ENCODE measurements at regions of chr1 and their contacts with region 1.

Region 1: DNA sequence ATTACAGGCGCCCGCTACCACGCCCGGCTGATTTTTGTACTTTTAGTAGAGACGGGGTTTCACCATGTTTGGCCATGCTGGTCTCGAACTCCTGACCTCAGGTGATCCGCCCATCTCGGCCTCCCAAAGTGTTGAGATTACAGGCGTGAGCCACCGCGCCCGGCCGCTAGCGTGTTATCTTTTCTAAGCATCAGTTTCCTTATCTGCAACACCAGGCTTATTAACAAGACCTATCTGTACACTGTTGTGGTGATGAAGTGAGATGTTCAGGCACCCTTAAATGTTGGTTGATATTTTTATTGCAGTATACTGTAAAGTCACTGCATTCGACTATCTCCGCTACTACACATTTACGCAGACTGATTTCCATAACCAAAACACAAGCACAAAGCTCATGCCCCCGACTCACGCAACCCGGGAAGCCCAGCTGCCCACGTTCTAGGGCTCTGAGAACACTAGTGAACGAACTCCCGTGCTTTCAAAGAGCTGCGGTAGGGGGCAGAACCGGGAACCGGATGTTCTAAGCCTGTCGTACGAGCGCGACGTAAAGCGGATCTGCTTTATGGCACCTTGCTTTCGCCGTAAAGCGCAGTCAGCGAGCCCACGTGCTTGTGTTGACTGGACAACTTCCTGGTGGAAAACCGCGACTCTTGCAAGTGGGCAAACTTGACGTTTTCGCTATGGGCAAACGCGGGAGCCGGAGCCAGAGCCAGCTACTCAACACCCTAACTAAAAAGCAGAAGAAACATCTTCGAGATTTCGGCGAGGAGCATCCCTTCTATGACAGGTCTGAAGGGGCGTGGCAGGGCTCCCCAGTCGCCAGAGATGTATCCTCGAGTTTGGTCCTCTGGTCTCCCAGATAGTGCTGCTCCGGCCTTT is at the start of gene UTP25:
- DNase-seq: peak; percentile 91 to 94 (median 93)
- H3K4me3 ChIP-seq: peak within 1 kb of the TSS; percentile 90 to 94
- H3K4me3 Mint-ChIP-seq: peak within 1 kb of the TSS; percentile 88 to 98 (median 96)
- H3K27ac ChIP-seq: peak within 1 kb of the TSS; percentile 73
- H3K27ac Mint-ChIP-seq: peak within 1 kb of the TSS; percentile 90 to 97 (median 92)
- H3K4me1 ChIP-seq: peaks cover 18% of the 10 kb centered on the region
- H3K4me1 Mint-ChIP-seq: peaks cover 24 to 46% (median 32%) of the 10 kb centered on the region in 4 donors
- H3K27me3 ChIP-seq: no peaks in the 10 kb centered on the region
- H3K27me3 Mint-ChIP-seq: peaks cover 5% of the 10 kb centered on the region in 2 donors
- total RNA-seq, gene UTP25: 13.4 to 13.6 TPM

Region 2: DNA sequence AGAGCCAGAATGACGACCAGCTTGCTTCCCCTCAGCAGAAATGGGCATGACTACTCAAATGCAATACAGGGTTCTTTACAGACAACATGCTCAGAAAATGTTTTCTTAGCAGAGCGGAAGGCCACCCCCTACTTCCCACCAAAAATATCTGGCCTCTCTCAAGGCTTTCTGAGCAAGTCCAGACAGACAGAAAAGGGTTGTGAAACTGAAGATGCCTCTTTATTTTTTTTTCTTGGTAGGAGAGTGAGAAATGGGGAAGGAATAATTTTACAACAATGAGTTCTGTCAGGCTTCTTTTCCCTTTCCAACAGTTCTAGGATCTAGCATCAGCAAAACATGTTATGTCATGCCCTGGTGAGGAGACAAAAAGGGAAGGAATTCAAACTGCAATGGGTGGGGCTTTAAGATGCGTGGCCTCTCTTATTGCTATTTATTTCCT is 416.1 kb before region 1 on chr1:
- CTCF ChIA-PET with region 1: no interaction called
- POLR2A ChIA-PET with region 1: no interaction called
- intact Hi-C with region 1: no loop called
- DNase-seq: no peak
- H3K4me3 ChIP-seq: no peak overlapping the region
- H3K4me3 Mint-ChIP-seq: peak overlapping the region in 1 of 8 donors; percentile 10
- H3K27ac ChIP-seq: no peak overlapping the region
- H3K27ac Mint-ChIP-seq: no peak overlapping the region
- H3K4me1 ChIP-seq: no peaks in the 10 kb centered on the region
- H3K4me1 Mint-ChIP-seq: no peaks in the 10 kb centered on the region
- H3K27me3 ChIP-seq: no peaks in the 10 kb centered on the region
- H3K27me3 Mint-ChIP-seq: peaks cover 16 to 24% of the 10 kb centered on the region in 2 donors

Region 3: GRCh38 chr1:209565759-209566678 is 261.6 kb before region 1 on chr1:
- CTCF ChIA-PET with region 1: interaction called, 4 read pairs
- POLR2A ChIA-PET with region 1: no interaction called
- intact Hi-C with region 1: loop called (anchors 5 kb)
- DNase-seq: peak; percentile 64 to 78 (median 67)
- H3K4me3 ChIP-seq: no peak overlapping the region
- H3K4me3 Mint-ChIP-seq: no peak overlapping the region
- H3K27ac ChIP-seq: no peak overlapping the region
- H3K27ac Mint-ChIP-seq: peak overlapping the region in 1 of 7 donors; percentile 45
- H3K4me1 ChIP-seq: peaks cover 6% of the 10 kb centered on the region
- H3K4me1 Mint-ChIP-seq: peaks cover 6 to 7% (median 6%) of the 10 kb centered on the region in 4 donors
- H3K27me3 ChIP-seq: peaks cover 9% of the 10 kb centered on the region
- H3K27me3 Mint-ChIP-seq: peaks cover 17 to 40% of the 10 kb centered on the region in 2 donors

Region 4: DNA sequence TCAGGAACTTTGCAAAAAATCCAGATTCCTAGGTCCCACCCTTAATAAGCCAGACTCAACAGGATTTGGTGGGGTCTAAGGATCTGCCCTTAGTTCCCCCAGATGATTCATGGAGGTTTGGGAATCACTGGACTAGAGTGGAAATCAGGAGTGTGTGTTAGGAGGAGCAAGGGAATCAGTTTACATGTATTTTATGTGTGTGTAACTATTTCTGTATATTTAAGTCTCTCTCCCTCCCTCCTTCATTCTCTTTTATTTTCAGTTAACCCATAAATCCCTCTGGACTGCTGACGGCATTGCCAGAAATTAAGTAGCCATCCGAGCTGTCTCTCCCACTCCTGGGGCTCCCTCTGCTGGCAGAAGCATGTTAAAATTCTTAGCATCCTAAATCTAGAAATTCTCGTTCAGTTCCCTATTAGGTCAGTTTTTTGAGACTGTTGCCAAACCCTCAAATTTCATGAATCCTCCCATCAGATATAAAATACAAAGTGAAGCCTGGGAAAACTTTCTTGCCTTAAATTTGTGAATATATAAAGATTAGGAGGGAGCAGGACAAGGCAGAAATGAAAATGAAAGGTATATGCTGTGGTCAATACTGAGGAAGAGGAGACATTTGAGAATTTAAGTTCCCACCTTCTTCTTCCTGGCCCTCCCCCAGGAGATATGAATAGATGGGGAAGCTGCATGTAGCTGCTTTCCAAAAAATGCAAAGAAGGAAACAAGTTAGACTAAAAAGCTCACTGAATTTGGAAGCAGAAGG is 134.7 kb before region 1 on chr1:
- CTCF ChIA-PET with region 1: interaction called, 9 read pairs
- POLR2A ChIA-PET with region 1: interaction called, 3 read pairs
- intact Hi-C with region 1: loop called (anchors 5 kb)
- DNase-seq: peak; percentile 60 to 68 (median 62)
- H3K4me3 ChIP-seq: no peak overlapping the region
- H3K4me3 Mint-ChIP-seq: peak overlapping the region in 1 of 8 donors; percentile 9
- H3K27ac ChIP-seq: no peak overlapping the region
- H3K27ac Mint-ChIP-seq: peak overlapping the region in 3 of 7 donors; percentile 43 to 66 (median 57)
- H3K4me1 ChIP-seq: peaks cover 15% of the 10 kb centered on the region
- H3K4me1 Mint-ChIP-seq: peaks cover 18 to 25% (median 22%) of the 10 kb centered on the region in 4 donors
- H3K27me3 ChIP-seq: no peaks in the 10 kb centered on the region
- H3K27me3 Mint-ChIP-seq: peaks cover 0 to 2% of the 10 kb centered on the region in 2 donors

Region 5: DNA sequence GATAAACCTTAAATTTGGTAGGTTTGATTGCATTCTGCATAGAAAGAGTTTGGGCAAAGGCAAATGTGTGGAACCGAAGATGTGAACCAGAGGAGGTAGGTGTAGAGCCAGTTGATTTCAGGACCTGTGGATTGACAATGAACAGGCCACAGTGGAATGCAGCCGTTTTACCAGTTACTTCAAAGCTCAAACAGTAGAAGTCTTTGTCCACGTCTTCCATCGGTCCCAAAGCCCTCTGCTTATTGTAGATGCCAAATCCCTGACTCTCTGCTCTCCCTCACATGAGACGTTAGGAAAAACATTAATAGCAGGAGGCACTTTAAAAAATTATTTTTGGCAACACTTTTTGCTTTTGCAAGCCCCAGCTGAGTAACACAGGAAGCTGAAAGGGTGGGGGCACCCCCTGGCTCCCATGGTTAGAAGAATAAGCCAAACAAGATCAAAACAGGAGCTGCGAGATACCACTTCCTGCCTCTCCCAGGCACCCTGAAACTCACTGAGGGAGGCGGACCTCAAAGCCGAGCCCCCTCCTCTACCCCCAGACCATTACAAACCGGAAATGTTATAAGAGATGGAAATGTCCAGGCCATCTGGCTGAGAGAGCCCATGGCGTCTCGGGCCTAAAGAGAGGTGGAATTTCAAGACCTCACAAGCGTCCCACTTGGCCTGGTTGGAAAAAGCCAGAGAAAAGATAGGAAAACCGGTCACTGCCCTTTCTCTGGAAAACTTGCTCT is 58.3 kb before region 1 on chr1:
- CTCF ChIA-PET with region 1: interaction called, 17 read pairs
- POLR2A ChIA-PET with region 1: interaction called, 15 read pairs
- intact Hi-C with region 1: loop called (anchors 1 kb)
- DNase-seq: peak; percentile 74 to 88 (median 78)
- H3K4me3 ChIP-seq: peak overlapping the region; percentile 83 to 84
- H3K4me3 Mint-ChIP-seq: no peak overlapping the region
- H3K27ac ChIP-seq: peak overlapping the region; percentile 79
- H3K27ac Mint-ChIP-seq: no peak overlapping the region
- H3K4me1 ChIP-seq: peaks cover 69% of the 10 kb centered on the region
- H3K4me1 Mint-ChIP-seq: peaks cover 1 to 31% (median 23%) of the 10 kb centered on the region in 4 donors
- H3K27me3 ChIP-seq: no peaks in the 10 kb centered on the region
- H3K27me3 Mint-ChIP-seq: no peaks in the 10 kb centered on the region

Region 6: GRCh38 chr1:209784265-209785169 is 43.1 kb before region 1 on chr1 and contains the start of gene C1orf74:
- CTCF ChIA-PET with region 1: interaction called, 65 read pairs
- POLR2A ChIA-PET with region 1: interaction called, 16 read pairs
- intact Hi-C with region 1: loop called (anchors 1 kb)
- DNase-seq: peak; percentile 97 to 99 (median 98)
- H3K4me3 ChIP-seq: peak within 1 kb of the TSS; percentile 49 to 72
- H3K4me3 Mint-ChIP-seq: peak within 1 kb of the TSS; percentile 92 to 99 (median 96)
- H3K27ac ChIP-seq: peak within 1 kb of the TSS; percentile 67
- H3K27ac Mint-ChIP-seq: peak within 1 kb of the TSS; percentile 95 to 100 (median 99)
- H3K4me1 ChIP-seq: peaks cover 21% of the 10 kb centered on the region
- H3K4me1 Mint-ChIP-seq: peaks cover 15 to 35% (median 33%) of the 10 kb centered on the region in 4 donors
- H3K27me3 ChIP-seq: no peaks in the 10 kb centered on the region
- H3K27me3 Mint-ChIP-seq: peaks cover 0 to 3% of the 10 kb centered on the region in 2 donors
- total RNA-seq, gene C1orf74: 1.2 TPM

Region 7: DNA sequence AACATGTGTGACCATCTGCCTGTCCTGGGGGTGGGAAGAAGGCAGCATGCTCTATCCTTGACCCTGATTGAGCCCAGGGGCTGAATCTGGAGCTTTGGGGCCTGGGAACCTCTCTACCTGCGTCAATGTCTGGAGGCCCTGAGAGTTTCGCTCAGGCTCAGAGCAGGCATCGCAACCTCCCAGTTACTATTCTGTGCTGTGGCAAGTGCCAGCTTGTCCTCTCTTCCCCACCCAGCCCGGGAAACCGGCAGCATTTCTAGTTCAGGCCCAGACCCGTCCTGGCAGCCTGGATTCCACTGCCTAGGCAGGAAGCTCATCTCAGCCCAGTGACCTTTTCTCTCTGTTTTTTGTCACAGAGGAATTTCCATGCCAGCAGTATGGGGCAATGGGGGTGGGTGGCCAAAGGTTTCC is 11.7 kb before region 1 on chr1:
- CTCF ChIA-PET with region 1: interaction called, 58 read pairs
- POLR2A ChIA-PET with region 1: interaction called, 4 read pairs
- intact Hi-C with region 1: no loop called
- DNase-seq: no peak
- H3K4me3 ChIP-seq: no peak overlapping the region
- H3K4me3 Mint-ChIP-seq: no peak overlapping the region
- H3K27ac ChIP-seq: no peak overlapping the region
- H3K27ac Mint-ChIP-seq: peak overlapping the region in 3 of 7 donors; percentile 50 to 62 (median 53)
- H3K4me1 ChIP-seq: peaks cover 7% of the 10 kb centered on the region
- H3K4me1 Mint-ChIP-seq: peaks cover 2 to 12% (median 4%) of the 10 kb centered on the region in 4 donors
- H3K27me3 ChIP-seq: no peaks in the 10 kb centered on the region
- H3K27me3 Mint-ChIP-seq: peaks cover 7 to 17% of the 10 kb centered on the region in 2 donors

Region 8: GRCh38 chr1:209937996-209938959 is 110.7 kb after region 1 on chr1 and contains the start of gene SYT14:
- CTCF ChIA-PET with region 1: no interaction called
- POLR2A ChIA-PET with region 1: no interaction called
- intact Hi-C with region 1: no loop called
- DNase-seq: no peak
- H3K4me3 ChIP-seq: no peak within 1 kb of the TSS
- H3K4me3 Mint-ChIP-seq: peak within 1 kb of the TSS; percentile 62 to 84 (median 78)
- H3K27ac ChIP-seq: no peak within 1 kb of the TSS
- H3K27ac Mint-ChIP-seq: peak within 1 kb of the TSS in 1 of 7 donors; percentile 68
- H3K4me1 ChIP-seq: peaks cover 4% of the 10 kb centered on the region
- H3K4me1 Mint-ChIP-seq: peaks cover 9 to 22% (median 12%) of the 10 kb centered on the region in 4 donors
- H3K27me3 ChIP-seq: peaks cover 10% of the 10 kb centered on the region
- H3K27me3 Mint-ChIP-seq: peaks cover 43 to 50% of the 10 kb centered on the region in 2 donors
- total RNA-seq, gene SYT14: not detected